ENCODE measurements at regions of chr11 and their contacts with region 1.

Region 1: DNA sequence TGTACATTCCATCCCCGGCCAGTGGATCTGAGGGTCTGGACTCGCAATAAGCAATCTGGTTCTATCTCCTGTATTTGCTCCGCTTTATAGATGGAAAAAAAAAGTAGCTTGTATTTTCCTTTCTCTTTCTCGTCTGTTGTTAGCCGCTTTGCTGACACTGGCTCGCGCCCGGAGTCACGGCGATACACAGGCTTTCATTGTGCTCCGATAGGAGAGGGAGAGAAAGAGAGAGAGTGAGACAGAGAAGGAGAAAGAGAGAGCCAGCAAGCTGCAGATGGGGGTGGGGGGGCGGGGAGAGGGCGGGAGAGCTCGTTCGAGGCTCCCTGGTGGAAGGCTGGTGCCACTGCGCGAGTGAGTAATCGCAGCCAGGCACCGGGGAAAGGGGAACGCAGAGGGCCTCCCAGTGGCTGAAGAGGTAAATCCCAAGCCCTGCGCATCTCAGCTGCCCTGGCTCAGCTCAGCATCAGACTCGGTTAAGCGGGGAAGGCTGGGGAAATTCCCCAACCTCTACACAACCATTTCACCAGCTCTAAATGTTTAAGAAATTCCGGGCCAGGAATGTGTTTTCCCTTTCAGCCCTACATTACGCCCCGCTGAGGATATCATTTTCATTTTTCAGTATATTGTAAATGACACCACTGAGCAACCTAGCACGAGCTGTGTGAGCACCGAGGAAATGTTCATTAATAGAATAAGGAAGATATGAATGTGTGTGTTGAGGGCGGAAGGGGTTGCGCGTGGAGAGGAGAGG is at the start of gene MAML2:
- DNase-seq: peak; percentile 91
- ATAC-seq: peak; percentile 81
- H3K4me3 ChIP-seq: peak within 1 kb of the TSS; percentile 100
- H3K27ac ChIP-seq: peak within 1 kb of the TSS; percentile 80
- H3K4me1 ChIP-seq: peaks cover 12% of the 10 kb centered on the region
- H3K27me3 ChIP-seq: no peaks in the 10 kb centered on the region
- CTCF ChIP-seq: peak; percentile 93 to 98 (median 96)
- EP300 ChIP-seq: no peak; a peak in 1 of 4 replicates
- POLR2A ChIP-seq: no peak; the same call in 1 of the 2 replicates
- RAD21 ChIP-seq: peak; percentile 90
- polyA plus RNA-seq, gene MAML2: 2.5 to 2.6 TPM

Region 2: GRCh38 chr11:95991545-95991944 is 351.6 kb before region 1 on chr11:
- CTCF ChIA-PET with region 1: interaction called, 10 read pairs
- POLR2A ChIA-PET with region 1: interaction called, 3 read pairs
- RAD21 ChIA-PET with region 1: interaction called, 3 read pairs
- SMC1A ChIA-PET with region 1: interaction called, 9 read pairs
- in situ Hi-C with region 1: no loop called
- intact Hi-C with region 1: no loop called
- DNase-seq: no peak
- ATAC-seq: no peak
- H3K4me3 ChIP-seq: no peak overlapping the region
- H3K27ac ChIP-seq: no peak overlapping the region
- H3K4me1 ChIP-seq: no peaks in the 10 kb centered on the region
- H3K27me3 ChIP-seq: no peaks in the 10 kb centered on the region
- CTCF ChIP-seq: no peak
- EP300 ChIP-seq: no peak
- POLR2A ChIP-seq: no peak
- RAD21 ChIP-seq: no peak

Region 3: DNA sequence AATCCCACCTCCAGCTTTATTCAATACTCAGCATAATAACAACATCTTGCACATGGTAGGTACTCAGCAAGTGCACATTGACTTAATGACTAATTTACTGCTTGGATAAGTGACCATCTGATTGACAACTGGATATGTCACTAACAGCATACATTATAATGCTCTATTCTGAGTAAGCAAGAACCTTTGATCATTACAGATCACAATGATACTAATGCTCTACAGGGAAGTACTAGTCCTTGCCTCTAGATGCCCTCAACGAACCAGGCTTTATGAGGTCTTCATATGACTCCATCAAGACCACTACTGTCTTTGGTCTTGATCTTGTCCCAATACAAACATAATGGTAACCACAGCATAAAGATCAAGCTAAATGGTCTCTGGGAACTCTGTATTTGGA is 251.7 kb before region 1 on chr11:
- CTCF ChIA-PET with region 1: interaction called, 67 read pairs
- POLR2A ChIA-PET with region 1: no interaction called
- RAD21 ChIA-PET with region 1: interaction called, 49 read pairs
- SMC1A ChIA-PET with region 1: interaction called, 62 read pairs
- in situ Hi-C with region 1: no loop called
- intact Hi-C with region 1: no loop called
- DNase-seq: no peak
- ATAC-seq: peak; percentile 83
- H3K4me3 ChIP-seq: no peak overlapping the region
- H3K27ac ChIP-seq: no peak overlapping the region
- H3K4me1 ChIP-seq: no peaks in the 10 kb centered on the region
- H3K27me3 ChIP-seq: no peaks in the 10 kb centered on the region
- CTCF ChIP-seq: peak; percentile 21 to 50 (median 40); a peak in 5 of 6 replicates
- EP300 ChIP-seq: no peak
- POLR2A ChIP-seq: no peak
- RAD21 ChIP-seq: peak; percentile 82

Region 4: DNA sequence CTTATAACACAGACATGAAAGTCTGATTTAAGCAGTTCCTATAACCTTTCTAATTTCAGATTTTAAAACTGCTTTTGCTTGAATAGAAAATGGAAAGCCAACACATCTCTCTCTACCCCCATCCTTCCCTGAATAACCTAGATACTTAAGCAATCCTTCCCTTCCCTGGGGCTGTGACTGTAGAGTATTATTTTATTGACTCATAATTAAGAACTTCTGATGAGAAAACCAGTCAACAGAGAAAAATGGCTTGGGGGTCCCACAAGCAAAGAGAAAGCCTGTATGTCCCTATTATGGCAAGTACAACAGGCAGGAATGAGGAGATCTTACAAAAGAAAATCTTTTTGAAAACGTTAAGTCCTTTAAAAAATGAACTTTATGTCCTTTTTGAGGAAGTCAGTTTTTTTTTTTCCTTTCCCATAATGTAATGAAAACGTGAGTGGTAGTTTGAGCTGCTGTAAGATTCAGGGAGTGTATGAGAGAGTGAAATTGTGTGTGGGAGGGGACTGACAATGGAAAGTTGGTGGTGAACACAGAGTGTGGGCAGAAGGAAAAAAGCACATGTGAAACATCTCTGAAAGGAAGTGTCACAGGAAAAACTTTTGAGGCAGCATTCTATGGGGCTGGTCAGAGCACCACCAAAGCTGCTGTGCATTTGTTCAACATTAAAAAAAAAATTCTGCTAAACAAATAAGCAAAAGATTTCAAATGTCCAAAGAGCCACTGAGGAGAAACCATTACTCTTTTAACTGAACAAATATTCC is 154.7 kb before region 1 on chr11:
- CTCF ChIA-PET with region 1: interaction called, 86 read pairs
- POLR2A ChIA-PET with region 1: interaction called, 3 read pairs
- RAD21 ChIA-PET with region 1: interaction called, 43 read pairs
- SMC1A ChIA-PET with region 1: interaction called, 34 read pairs
- in situ Hi-C with region 1: no loop called
- intact Hi-C with region 1: loop called (anchors 1 kb)
- DNase-seq: peak; percentile 75
- ATAC-seq: peak; percentile 67
- H3K4me3 ChIP-seq: no peak overlapping the region
- H3K27ac ChIP-seq: peak overlapping the region; percentile 93
- H3K4me1 ChIP-seq: peaks cover 76% of the 10 kb centered on the region
- H3K27me3 ChIP-seq: no peaks in the 10 kb centered on the region
- CTCF ChIP-seq: no peak
- EP300 ChIP-seq: peak; percentile 23 to 78; a peak in 3 of 4 replicates
- POLR2A ChIP-seq: no peak
- RAD21 ChIP-seq: no peak

Region 5: DNA sequence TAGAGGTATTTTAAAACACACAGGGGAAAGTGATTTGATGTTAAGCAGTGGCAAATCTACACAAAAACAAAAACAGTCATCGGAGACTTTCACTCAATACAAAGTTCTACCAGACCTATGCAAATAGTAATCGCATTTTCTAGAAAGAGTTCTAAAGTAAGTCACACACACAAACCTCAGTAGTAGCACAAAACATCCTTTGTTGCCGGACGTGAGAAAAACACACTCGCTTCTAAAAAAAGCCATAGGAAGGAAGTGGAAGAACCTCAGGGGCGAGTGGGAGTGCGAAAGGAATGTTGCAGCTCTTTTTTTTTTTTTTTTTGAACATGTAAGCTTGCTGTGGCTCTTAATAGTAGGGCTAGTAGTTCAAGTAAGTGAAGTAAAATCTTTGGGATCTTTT is 89.0 kb before region 1 on chr11:
- CTCF ChIA-PET with region 1: interaction called, 88 read pairs
- POLR2A ChIA-PET with region 1: interaction called, 12 read pairs
- RAD21 ChIA-PET with region 1: interaction called, 14 read pairs
- SMC1A ChIA-PET with region 1: interaction called, 84 read pairs
- in situ Hi-C with region 1: no loop called
- intact Hi-C with region 1: loop called (anchors 5 kb)
- DNase-seq: peak; percentile 91
- ATAC-seq: peak; percentile 58
- H3K4me3 ChIP-seq: peak overlapping the region; percentile 34
- H3K27ac ChIP-seq: peak overlapping the region; percentile 34
- H3K4me1 ChIP-seq: peaks cover 60% of the 10 kb centered on the region
- H3K27me3 ChIP-seq: no peaks in the 10 kb centered on the region
- CTCF ChIP-seq: no peak
- EP300 ChIP-seq: peak; percentile 19 to 62; a peak in 1 of 4 replicates
- POLR2A ChIP-seq: no peak
- RAD21 ChIP-seq: peak; percentile 23; the same call in 1 of the 2 replicates

Region 6: GRCh38 chr11:96317571-96317970 is 25.6 kb before region 1 on chr11:
- CTCF ChIA-PET with region 1: interaction called, 17 read pairs
- POLR2A ChIA-PET with region 1: no interaction called
- RAD21 ChIA-PET with region 1: interaction called, 6 read pairs
- SMC1A ChIA-PET with region 1: interaction called, 97 read pairs
- in situ Hi-C with region 1: no loop called
- intact Hi-C with region 1: no loop called
- DNase-seq: no peak
- ATAC-seq: no peak
- H3K4me3 ChIP-seq: no peak overlapping the region
- H3K27ac ChIP-seq: no peak overlapping the region
- H3K4me1 ChIP-seq: peaks cover 20% of the 10 kb centered on the region
- H3K27me3 ChIP-seq: no peaks in the 10 kb centered on the region
- CTCF ChIP-seq: no peak
- EP300 ChIP-seq: no peak
- POLR2A ChIP-seq: no peak
- RAD21 ChIP-seq: no peak

Region 7: GRCh38 chr11:96506953-96507354 is 163.8 kb after region 1 on chr11:
- CTCF ChIA-PET with region 1: no interaction called
- POLR2A ChIA-PET with region 1: no interaction called
- RAD21 ChIA-PET with region 1: no interaction called
- SMC1A ChIA-PET with region 1: no interaction called
- in situ Hi-C with region 1: no loop called
- intact Hi-C with region 1: no loop called
- DNase-seq: no peak
- ATAC-seq: no peak
- H3K4me3 ChIP-seq: no peak overlapping the region
- H3K27ac ChIP-seq: no peak overlapping the region
- H3K4me1 ChIP-seq: no peaks in the 10 kb centered on the region
- H3K27me3 ChIP-seq: no peaks in the 10 kb centered on the region
- CTCF ChIP-seq: no peak
- EP300 ChIP-seq: no peak
- POLR2A ChIP-seq: no peak
- RAD21 ChIP-seq: no peak

Measured in GM12878 (cell line).